Heart left ventricle (tissue), 16 donors: ENCODE measurements at regions of chr6 and their contacts with region 1.

Region 1: GRCh38 chr6:121666814-121667213 is 231.4 kb downstream of the GJA1 start:
- DNase-seq: no peak
- ATAC-seq: peak; percentile 93 to 96 (median 95)
- H3K4me3 ChIP-seq: no peak overlapping the region
- H3K27ac ChIP-seq: peak overlapping the region in 11 of 12 donors; percentile 18 to 74 (median 47)
- H3K4me1 ChIP-seq: peaks cover 0 to 17% (median 12%) of the 10 kb centered on the region in 12 donors
- H3K27me3 ChIP-seq: no peaks in the 10 kb centered on the region
- CTCF ChIP-seq: no peak
- POLR2A ChIP-seq: no peak

Region 2: DNA sequence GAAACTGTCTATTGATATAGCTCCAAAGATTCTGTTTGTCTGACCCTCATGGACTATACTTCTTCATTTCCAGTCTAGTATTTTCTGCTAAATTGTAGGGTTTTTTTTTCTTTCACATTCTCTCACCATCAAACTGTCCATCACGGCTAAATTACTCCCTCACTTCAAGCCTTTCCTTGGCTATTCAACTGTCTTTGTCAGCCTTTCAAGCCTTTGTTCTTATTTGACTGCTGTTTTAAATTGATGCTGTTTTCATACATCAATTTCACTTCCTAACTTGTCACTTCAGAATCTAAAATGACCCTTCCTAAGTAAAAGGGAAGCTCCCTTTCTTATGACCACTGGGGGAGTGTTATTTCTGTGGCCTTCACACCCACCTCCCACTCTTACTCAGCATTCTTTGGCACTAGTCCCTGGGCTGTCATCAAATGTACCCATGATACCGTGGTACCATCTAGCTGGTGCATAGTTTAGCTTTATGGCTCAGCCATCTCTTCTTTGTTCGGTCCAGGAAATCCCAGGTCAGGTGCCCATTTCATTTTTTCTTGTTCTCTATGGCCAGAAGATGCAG is 222.8 kb before region 1 on chr6:
- intact Hi-C with region 1: loop called in 4 of 10 experiments (anchors 5 to 10 kb)
- DNase-seq: peak in 3 of 5 donors; percentile 39 to 44 (median 43)
- ATAC-seq: peak; percentile 70 to 83 (median 80)
- H3K4me3 ChIP-seq: peak overlapping the region in 6 of 12 donors; percentile 3 to 86 (median 44)
- H3K27ac ChIP-seq: peak overlapping the region; percentile 2 to 93 (median 54)
- H3K4me1 ChIP-seq: peaks cover 0 to 78% (median 28%) of the 10 kb centered on the region in 12 donors
- H3K27me3 ChIP-seq: no peaks in the 10 kb centered on the region
- CTCF ChIP-seq: no peak
- POLR2A ChIP-seq: no peak

Region 3: GRCh38 chr6:121771937-121772720 is 105.3 kb after region 1 on chr6:
- intact Hi-C with region 1: loop called in 1 of 10 experiments (anchors 5 kb)
- DNase-seq: no peak
- ATAC-seq: peak in 1 of 4 donors; percentile 47
- H3K4me3 ChIP-seq: no peak overlapping the region
- H3K27ac ChIP-seq: peak overlapping the region in 2 of 12 donors; percentile 15 to 50
- H3K4me1 ChIP-seq: peaks cover 0 to 20% (median 0%) of the 10 kb centered on the region in 12 donors
- H3K27me3 ChIP-seq: no peaks in the 10 kb centered on the region
- CTCF ChIP-seq: no peak
- POLR2A ChIP-seq: no peak

Region 4: GRCh38 chr6:121838842-121839241 is 172.0 kb after region 1 on chr6:
- intact Hi-C with region 1: loop called in 3 of 10 experiments (anchors 5 to 10 kb)
- DNase-seq: peak; percentile 48 to 75 (median 66)
- ATAC-seq: peak; percentile 93 to 99 (median 96)
- H3K4me3 ChIP-seq: no peak overlapping the region
- H3K27ac ChIP-seq: peak overlapping the region in 4 of 12 donors; percentile 0 to 45 (median 12)
- H3K4me1 ChIP-seq: peaks cover 0 to 8% (median 0%) of the 10 kb centered on the region in 12 donors
- H3K27me3 ChIP-seq: no peaks in the 10 kb centered on the region
- CTCF ChIP-seq: no peak
- POLR2A ChIP-seq: no peak

Region 5: GRCh38 chr6:122170274-122170673 is 503.5 kb after region 1 on chr6:
- intact Hi-C with region 1: loop called in 1 of 10 experiments (anchors 10 kb)
- DNase-seq: no peak
- ATAC-seq: no peak
- H3K4me3 ChIP-seq: no peak overlapping the region
- H3K27ac ChIP-seq: no peak overlapping the region
- H3K4me1 ChIP-seq: peaks cover 0 to 5% (median 0%) of the 10 kb centered on the region in 12 donors
- H3K27me3 ChIP-seq: no peaks in the 10 kb centered on the region
- CTCF ChIP-seq: no peak
- POLR2A ChIP-seq: no peak